ENCODE measurements at regions of chr5 and their contacts with region 1.

Region 1: GRCh38 chr5:6576861-6577501 is 55.9 kb downstream of the NSUN2 start:
- DNase-seq: peak; percentile 52
- H3K4me3 Mint-ChIP-seq: no peak overlapping the region
- H3K27ac Mint-ChIP-seq: no peak overlapping the region
- H3K4me1 Mint-ChIP-seq: no peaks in the 10 kb centered on the region
- H3K27me3 Mint-ChIP-seq: peaks cover 74% of the 10 kb centered on the region
- CTCF ChIP-seq: peak; percentile 19

Region 2: GRCh38 chr5:5141625-5142532 is 1435.1 kb before region 1 on chr5:
- CTCF ChIA-PET with region 1: no interaction called
- intact Hi-C with region 1: loop called (anchors 10 kb)
- DNase-seq: peak; percentile 57
- H3K4me3 Mint-ChIP-seq: no peak overlapping the region
- H3K27ac Mint-ChIP-seq: no peak overlapping the region
- H3K4me1 Mint-ChIP-seq: no peaks in the 10 kb centered on the region
- H3K27me3 Mint-ChIP-seq: no peaks in the 10 kb centered on the region
- CTCF ChIP-seq: peak; percentile 42

Region 3: GRCh38 chr5:5492087-5492933 is 1084.7 kb before region 1 on chr5:
- CTCF ChIA-PET with region 1: no interaction called
- intact Hi-C with region 1: loop called (anchors 1 kb)
- DNase-seq: peak; percentile 46
- H3K4me3 Mint-ChIP-seq: no peak overlapping the region
- H3K27ac Mint-ChIP-seq: no peak overlapping the region
- H3K4me1 Mint-ChIP-seq: peaks cover 7% of the 10 kb centered on the region
- H3K27me3 Mint-ChIP-seq: no peaks in the 10 kb centered on the region
- CTCF ChIP-seq: peak; percentile 43

Region 4: DNA sequence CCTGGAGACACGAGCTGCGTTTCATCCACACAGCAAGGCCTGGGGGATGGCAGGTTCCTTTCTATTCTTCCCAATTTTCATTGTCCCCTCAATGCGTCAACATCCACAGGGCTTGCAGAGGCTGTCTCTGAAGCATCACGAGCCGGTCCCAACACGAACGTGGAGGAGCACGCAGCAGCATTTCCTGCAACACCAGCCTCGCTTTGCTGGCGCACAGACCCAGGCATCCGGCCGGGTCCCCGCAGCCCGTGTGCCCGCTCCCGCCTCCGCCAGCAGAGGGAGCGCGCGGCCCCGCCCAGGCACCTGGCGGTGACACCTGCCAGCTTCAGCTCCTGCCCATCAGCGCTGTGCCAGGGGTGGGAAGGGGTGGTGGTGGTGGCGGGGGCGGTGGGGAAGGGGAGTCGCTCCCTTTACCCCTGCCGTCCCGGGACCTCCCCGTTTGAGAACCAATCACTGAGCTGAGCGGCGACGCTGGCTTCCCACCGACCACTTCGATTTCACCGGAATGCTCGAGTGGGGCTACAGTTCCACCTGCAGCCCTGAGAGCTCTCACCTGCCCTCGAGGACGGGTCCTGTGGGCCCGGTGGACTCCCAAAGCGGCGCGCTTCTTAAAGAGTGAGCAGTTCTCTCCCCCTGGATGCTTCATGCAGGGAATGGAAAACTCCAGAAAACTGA is 690.0 kb before region 1 on chr5:
- CTCF ChIA-PET with region 1: no interaction called
- intact Hi-C with region 1: loop called (anchors 2 kb)
- DNase-seq: peak; percentile 56
- H3K4me3 Mint-ChIP-seq: no peak overlapping the region
- H3K27ac Mint-ChIP-seq: no peak overlapping the region
- H3K4me1 Mint-ChIP-seq: no peaks in the 10 kb centered on the region
- H3K27me3 Mint-ChIP-seq: no peaks in the 10 kb centered on the region
- CTCF ChIP-seq: peak; percentile 31

Region 5: DNA sequence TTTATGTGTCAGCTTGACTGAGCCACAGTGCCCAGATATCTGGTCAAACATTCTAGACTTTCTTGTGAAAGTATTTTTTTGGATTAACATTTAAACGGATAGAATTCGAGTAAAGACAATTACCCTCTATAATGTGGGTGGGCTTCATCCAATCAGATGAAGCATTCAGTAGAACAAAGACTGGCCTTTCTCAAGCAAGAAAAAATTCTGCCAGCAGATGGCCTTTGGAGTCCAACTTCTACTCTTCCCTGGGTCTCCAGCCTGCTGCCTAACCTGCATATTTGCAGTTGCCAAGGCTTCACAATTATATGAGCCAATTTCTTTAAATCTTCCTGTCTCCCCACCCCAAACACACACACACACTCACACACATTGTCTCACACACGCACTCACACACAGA is 285.0 kb before region 1 on chr5:
- CTCF ChIA-PET with region 1: no interaction called
- intact Hi-C with region 1: loop called (anchors 1 kb)
- DNase-seq: no peak
- H3K4me3 Mint-ChIP-seq: no peak overlapping the region
- H3K27ac Mint-ChIP-seq: no peak overlapping the region
- H3K4me1 Mint-ChIP-seq: no peaks in the 10 kb centered on the region
- H3K27me3 Mint-ChIP-seq: no peaks in the 10 kb centered on the region
- CTCF ChIP-seq: no peak

Region 6: DNA sequence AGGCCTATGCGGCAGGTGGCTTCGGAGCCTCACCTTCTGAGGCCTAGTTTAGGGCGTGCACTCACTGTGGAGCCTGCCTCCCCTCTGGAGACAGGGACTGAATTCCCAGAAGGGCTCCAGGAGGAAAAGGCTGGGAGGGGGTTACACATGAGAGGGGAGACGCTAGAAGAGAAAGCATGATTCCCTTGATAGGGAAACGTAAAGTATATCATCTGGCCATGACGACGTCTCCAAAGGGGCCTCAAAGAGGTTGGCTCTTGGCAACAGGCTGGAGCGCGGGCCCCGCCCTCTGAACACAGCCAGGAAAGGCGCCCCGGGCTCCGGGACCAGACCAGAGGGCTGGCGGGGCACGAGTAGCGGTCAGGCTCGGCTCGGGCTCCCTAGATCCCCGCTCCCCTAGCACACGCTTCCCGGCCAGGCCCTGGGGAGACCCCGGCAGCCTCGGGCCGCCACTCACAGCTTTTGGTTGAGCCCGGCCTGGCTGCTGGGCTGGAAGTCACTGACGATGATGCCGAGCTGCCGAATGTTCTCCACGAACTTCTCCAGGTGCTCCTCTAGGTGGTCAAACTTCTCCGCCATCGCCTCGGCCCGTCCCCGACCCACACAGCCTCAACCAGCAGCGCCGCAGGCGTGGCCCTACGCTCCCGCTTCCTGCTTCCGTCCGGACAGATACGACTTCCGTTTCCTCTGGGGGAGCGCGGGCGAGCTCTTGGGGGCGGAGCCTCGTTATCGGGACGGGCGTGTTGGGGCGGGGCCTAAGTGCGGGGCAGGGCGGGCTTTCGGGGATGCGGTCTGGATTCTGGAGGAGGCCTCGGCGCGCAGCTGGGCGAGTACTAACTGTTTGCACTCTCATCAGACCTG is 198.8 kb before region 1 on chr5 and contains the start of gene MED10:
- CTCF ChIA-PET with region 1: interaction called, 3 read pairs
- intact Hi-C with region 1: loop called (anchors 5 kb)
- DNase-seq: peak; percentile 94
- H3K4me3 Mint-ChIP-seq: peak within 1 kb of the TSS; percentile 96
- H3K27ac Mint-ChIP-seq: peak within 1 kb of the TSS; percentile 94
- H3K4me1 Mint-ChIP-seq: peaks cover 15% of the 10 kb centered on the region
- H3K27me3 Mint-ChIP-seq: peaks cover 3% of the 10 kb centered on the region
- CTCF ChIP-seq: no peak
- total RNA-seq, gene MED10: 33.6 and 39.9 TPM in 2 replicates

Measured in Calu3 (cell line).